Lower leg skin (tissue), 4 donors: ENCODE measurements at regions of chr6 and their contacts with region 1.

Region 1: DNA sequence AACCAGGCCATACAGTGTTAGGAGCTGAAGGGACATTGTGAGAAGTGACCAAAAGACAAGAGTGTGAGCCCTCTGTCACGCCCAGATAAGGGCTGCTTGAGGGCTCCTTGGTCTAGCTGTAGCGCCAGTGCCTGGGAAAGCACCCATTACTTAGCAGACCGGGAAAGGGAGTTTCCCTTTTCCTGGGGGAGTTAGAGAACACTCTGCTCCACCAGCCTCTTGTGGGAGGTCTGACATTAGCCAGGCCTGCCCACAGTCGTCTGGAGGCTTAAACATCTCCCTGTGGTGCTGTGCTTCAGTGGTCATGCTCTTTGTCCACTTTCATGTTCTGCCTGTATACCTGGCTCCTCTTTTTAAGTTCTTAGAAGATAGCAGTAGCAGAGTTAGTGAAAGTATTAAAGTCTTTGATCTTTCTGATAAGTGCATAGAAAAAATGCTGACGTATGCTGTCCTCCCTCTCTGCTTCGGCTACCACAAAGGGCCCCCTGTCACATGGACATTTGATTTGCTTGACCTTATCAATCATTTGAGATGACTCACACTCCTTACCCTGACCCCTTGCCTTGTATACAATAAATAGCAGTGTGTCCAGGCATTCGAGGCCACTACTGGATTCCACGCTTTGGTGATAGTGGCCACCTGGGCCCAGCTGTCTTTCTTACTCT is 201.5 kb upstream of the ECI2 start:
- DNase-seq: no peak
- H3K4me3 ChIP-seq: no peak overlapping the region
- CTCF ChIP-seq: no peak
- POLR2A ChIP-seq: no peak

Region 2: GRCh38 chr6:2426561-2427340 is 1910.2 kb before region 1 on chr6:
- intact Hi-C with region 1: no loop called
- DNase-seq: no peak
- H3K4me3 ChIP-seq: no peak overlapping the region
- CTCF ChIP-seq: no peak
- POLR2A ChIP-seq: no peak

Region 3: GRCh38 chr6:3868544-3868943 is 468.4 kb before region 1 on chr6:
- intact Hi-C with region 1: no loop called
- DNase-seq: peak in 1 of 2 donors; percentile 67
- H3K4me3 ChIP-seq: no peak overlapping the region
- CTCF ChIP-seq: no peak
- POLR2A ChIP-seq: no peak

Region 4: GRCh38 chr6:4303638-4304037 is 33.3 kb before region 1 on chr6:
- intact Hi-C with region 1: loop called (anchors 2 kb)
- DNase-seq: no peak
- H3K4me3 ChIP-seq: no peak overlapping the region
- CTCF ChIP-seq: no peak
- POLR2A ChIP-seq: no peak